Colonic mucosa (tissue), 4 donors: ENCODE measurements at regions of chr1 and their contacts with region 1.

Region 1: DNA sequence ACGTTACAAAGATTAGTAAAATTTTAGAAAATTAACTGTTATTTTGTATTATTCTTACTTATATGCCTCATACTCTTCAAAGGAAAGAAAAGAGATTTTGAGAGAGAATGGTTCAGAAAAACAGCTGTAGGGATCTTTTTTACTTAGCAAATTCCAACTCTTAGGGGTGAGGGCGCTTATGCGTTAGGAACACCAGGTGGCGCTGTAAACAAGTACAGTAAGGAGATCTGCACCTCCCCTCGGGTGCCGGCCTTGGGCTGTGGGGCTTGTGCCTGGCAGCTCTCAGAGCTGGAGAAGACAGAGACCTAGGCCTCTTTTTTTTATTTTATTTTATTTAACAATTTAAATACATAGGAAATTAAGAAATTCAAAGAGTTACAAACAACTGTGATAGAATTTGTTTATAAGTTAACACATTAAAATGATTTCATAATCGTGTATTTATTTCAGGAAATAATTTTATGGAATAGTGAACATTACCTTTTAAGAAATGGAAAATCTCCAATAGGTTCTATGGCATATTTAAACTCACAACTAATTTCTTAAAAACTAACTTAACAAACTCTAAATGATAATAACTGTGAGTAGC is 32.6 kb downstream of the UTP25 start:
- DNase-seq: peak; percentile 71
- H3K4me3 ChIP-seq: no peak overlapping the region
- H3K27ac ChIP-seq: no peak overlapping the region
- H3K4me1 ChIP-seq: no peaks in the 10 kb centered on the region
- H3K27me3 ChIP-seq: no peaks in the 10 kb centered on the region
- CTCF ChIP-seq: peak; percentile 76

Region 2: DNA sequence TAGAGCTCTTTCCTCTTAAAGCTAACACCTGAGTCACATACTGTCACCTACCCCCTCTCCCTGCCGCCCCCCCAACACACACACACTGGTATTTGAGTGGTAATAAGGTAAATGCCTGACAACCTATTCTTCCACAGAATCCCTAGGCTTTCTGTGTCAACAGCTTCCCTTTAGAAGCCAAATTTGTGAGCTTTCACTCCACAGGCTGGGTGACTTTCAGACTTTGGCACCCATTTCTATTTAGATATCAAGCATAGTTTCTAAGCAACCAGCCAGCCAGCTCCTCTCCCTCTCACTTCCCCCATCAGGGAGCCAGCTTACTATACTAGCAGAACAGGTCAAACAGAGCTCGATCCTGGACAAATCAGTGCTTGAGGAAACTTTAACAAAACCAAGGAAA is 72.8 kb before region 1 on chr1:
- intact Hi-C with region 1: no loop called
- DNase-seq: peak; percentile 62
- H3K4me3 ChIP-seq: no peak overlapping the region
- H3K27ac ChIP-seq: no peak overlapping the region
- H3K4me1 ChIP-seq: peaks cover 7% of the 10 kb centered on the region
- H3K27me3 ChIP-seq: no peaks in the 10 kb centered on the region
- CTCF ChIP-seq: no peak

Region 3: GRCh38 chr1:209993061-209993830 is 132.9 kb after region 1 on chr1:
- intact Hi-C with region 1: loop called (anchors 5 kb)
- DNase-seq: no peak
- H3K4me3 ChIP-seq: no peak overlapping the region
- H3K27ac ChIP-seq: no peak overlapping the region
- H3K4me1 ChIP-seq: no peaks in the 10 kb centered on the region
- H3K27me3 ChIP-seq: no peaks in the 10 kb centered on the region
- CTCF ChIP-seq: no peak

Region 4: DNA sequence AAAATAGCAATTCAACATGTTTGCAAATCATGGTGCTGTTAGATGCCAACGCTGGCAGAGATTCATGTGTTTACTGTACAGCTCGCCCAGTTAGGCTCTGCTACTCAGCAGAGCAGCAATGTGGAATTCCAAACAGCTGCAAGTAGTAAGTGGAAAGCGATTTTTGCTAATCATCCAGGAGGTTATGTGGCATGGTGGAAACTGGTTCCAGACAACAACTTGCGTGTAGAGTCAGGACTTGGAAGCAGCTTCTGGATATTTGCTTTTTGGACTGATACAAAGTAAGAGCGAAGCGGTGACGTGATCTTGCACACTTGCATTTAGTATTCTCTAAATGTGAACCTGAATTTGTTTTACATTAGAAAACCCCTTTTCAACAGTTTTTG is 441.2 kb after region 1 on chr1:
- intact Hi-C with region 1: loop called (anchors 10 kb)
- DNase-seq: no peak
- H3K4me3 ChIP-seq: no peak overlapping the region
- H3K27ac ChIP-seq: no peak overlapping the region
- H3K4me1 ChIP-seq: no peaks in the 10 kb centered on the region
- H3K27me3 ChIP-seq: no peaks in the 10 kb centered on the region
- CTCF ChIP-seq: no peak